K562 (cell line): ENCODE measurements at regions of chr21 and their contacts with region 1.

Region 1: DNA sequence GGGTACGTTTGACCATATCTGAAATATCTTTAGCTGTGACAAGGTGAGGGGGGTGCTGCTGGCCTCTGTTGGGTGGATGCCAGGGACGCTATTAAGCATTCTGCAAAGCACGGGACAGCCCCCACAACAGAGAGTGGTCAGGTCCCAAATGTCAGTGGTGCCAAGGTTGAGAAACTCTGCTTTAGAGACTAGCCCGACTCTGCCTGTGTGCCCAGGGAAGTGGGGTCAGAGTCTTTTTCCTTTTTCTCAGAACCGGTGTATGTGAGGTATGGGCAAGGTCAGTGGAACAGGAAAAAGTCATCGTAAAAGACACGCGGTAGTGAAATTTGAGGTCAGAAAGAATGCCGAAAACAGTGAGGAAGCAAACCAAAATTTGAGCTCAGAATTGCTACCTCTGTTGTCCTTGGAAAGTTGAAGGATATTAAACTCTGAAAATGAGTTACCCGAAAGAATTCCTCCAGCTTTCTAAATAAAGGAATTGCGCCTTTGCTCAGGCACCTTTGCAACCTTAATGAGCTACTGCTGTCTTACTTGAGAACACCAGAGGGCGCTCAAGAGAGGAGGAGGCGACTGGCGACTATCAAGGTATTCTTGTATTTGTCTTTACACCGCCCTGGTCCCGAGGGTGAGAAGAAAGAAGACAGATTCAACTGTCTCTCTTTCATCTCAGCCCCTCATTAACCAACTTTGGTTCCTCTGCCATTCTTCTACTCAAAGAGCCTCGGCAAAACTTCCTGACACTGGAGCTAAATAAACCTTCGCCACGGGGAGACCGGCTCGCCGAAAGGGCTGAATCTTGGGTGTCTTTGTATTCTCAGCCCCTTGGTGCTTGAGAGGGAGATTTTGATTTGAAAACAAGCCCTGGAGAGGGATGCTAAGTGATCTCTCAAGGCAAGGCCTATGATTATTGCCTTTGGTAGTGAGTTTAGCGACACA is 85.4 kb upstream of the OLIG2 start:
- DNase-seq: peak; percentile 62 to 75 (median 74)
- ATAC-seq: peak; percentile 92
- H3K4me3 ChIP-seq: no peak overlapping the region
- H3K27ac ChIP-seq: no peak overlapping the region
- H3K4me1 ChIP-seq: no peaks in the 10 kb centered on the region
- H3K27me3 ChIP-seq: peaks cover 18 to 27% of the 10 kb centered on the region in 2 experiments; a peak in 4 of 5 replicates
- CTCF ChIP-seq: peak; percentile 82 to 85 (median 84)
- EP300 ChIP-seq: no peak
- POLR2A ChIP-seq: no peak
- RAD21 ChIP-seq: peak; percentile 36 to 81; a peak in 3 of 4 replicates

Region 2: DNA sequence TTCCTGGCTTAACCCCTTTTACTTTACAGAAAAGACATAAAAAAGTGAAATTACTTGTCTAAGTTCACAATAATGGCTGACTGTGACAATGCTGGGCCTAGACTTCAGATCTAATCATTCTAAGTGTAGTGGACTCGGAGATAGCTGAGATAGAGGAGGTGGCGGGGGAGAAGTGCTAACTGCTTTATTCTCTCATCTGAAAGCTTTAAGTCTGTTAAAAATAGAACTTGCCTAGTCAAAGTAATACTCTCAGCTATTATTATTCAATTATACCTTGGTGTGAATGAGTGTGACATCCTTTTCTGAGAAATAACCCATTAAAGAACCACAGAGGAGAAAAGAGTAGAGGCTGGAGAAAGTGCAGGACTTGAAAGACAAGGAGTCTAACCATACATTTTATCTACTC is 10.7 kb before region 1 on chr21:
- CTCF ChIA-PET with region 1: no interaction called
- POLR2A ChIA-PET with region 1: no interaction called
- in situ Hi-C with region 1: no loop called
- intact Hi-C with region 1: no loop called
- DNase-seq: no peak
- ATAC-seq: no peak
- H3K4me3 ChIP-seq: no peak overlapping the region
- H3K27ac ChIP-seq: no peak overlapping the region
- H3K4me1 ChIP-seq: peaks cover 0 to 7% of the 10 kb centered on the region in 2 experiments; a peak in 3 of 5 replicates
- H3K27me3 ChIP-seq: peaks cover 15 to 26% of the 10 kb centered on the region in 2 experiments
- CTCF ChIP-seq: no peak
- EP300 ChIP-seq: no peak
- POLR2A ChIP-seq: no peak
- RAD21 ChIP-seq: no peak

Region 3: GRCh38 chr21:33449616-33450015 is 509.3 kb after region 1 on chr21:
- CTCF ChIA-PET with region 1: no interaction called
- POLR2A ChIA-PET with region 1: no interaction called
- in situ Hi-C with region 1: no loop called
- intact Hi-C with region 1: loop called (anchors 5 kb)
- DNase-seq: no peak
- ATAC-seq: no peak
- H3K4me3 ChIP-seq: no peak overlapping the region
- H3K27ac ChIP-seq: no peak overlapping the region
- H3K4me1 ChIP-seq: no peaks in the 10 kb centered on the region
- H3K27me3 ChIP-seq: no peaks in the 10 kb centered on the region
- CTCF ChIP-seq: no peak
- EP300 ChIP-seq: no peak
- POLR2A ChIP-seq: no peak
- RAD21 ChIP-seq: no peak